HCT116 (cell line): ENCODE measurements at regions of chr10 and their contacts with region 1.

Region 1: GRCh38 chr10:80498833-80499741 is 38.6 kb upstream of the SH2D4B start:
- DNase-seq: peak; percentile 85
- ATAC-seq: peak; percentile 85
- H3K4me3 ChIP-seq: peak overlapping the region in 1 of 2 experiments; percentile 27; a peak in 2 of 4 replicates
- H3K27ac ChIP-seq: peak overlapping the region; percentile 95
- H3K4me1 ChIP-seq: peaks cover 90 to 95% of the 10 kb centered on the region in 2 experiments
- H3K27me3 ChIP-seq: no peaks in the 10 kb centered on the region
- CTCF ChIP-seq: 0 out of 6 replicates have a peak, but pooled peaks of 1 of the 3 experiments have one; percentile 4
- POLR2A ChIP-seq: no peak
- RAD21 ChIP-seq: no peak

Region 2: GRCh38 chr10:80459047-80459931 is 39.8 kb before region 1 on chr10:
- CTCF ChIA-PET with region 1: interaction called, 53 read pairs
- POLR2A ChIA-PET with region 1: interaction called, 18 read pairs
- RAD21 ChIA-PET with region 1: interaction called in 1 of 2 experiments, 4 read pairs
- intact Hi-C with region 1: loop called (anchors 2 kb)
- DNase-seq: no peak
- ATAC-seq: peak; percentile 65
- H3K4me3 ChIP-seq: peak overlapping the region in 1 of 2 experiments; percentile 47; a peak in 1 of 4 replicates
- H3K27ac ChIP-seq: peak overlapping the region; percentile 79
- H3K4me1 ChIP-seq: peaks cover 81 to 92% of the 10 kb centered on the region in 2 experiments
- H3K27me3 ChIP-seq: no peaks in the 10 kb centered on the region
- CTCF ChIP-seq: no peak
- POLR2A ChIP-seq: no peak
- RAD21 ChIP-seq: 0 out of 2 replicates have a peak, but pooled peaks have one; percentile 4

Region 3: DNA sequence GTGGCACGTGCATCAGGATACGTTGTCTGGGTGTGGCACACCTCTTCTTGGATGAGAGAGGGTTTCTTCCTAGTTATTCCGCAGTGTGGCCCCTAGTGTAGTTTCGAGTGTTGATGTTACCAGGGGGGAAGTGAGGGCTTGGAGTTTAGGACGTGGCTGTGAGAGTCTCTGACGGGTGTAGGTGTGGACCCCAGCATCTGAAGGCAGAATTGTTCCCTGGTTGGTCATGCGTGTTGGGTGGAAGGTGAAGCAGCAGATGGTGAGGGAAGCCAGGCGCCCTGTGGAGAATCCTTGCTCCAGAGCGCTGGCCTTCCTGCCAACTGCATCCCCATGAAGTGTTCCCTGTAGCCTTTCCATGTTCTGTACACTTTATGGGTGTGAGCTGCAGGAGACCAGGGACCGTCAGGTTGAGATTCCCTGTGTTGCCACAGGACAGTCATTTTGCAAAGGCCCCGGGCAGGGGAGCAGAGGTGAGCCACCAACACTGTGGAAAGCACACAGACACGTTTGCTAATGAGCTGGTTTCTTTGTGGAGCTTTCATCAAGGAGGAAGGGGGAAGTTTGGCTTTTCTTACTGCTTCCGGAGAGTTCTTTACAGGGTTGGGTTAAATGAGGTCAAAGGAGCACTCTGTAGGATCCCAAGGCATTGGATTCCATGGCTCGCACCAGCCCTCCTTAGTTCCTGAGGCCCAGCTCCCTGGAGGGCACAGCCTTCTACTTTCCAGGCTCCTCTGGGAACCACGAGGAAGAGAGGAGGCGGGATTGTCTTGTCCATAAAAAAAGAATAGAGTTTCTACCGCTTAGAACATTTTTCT is 12.9 kb before region 1 on chr10:
- CTCF ChIA-PET with region 1: no interaction called
- POLR2A ChIA-PET with region 1: interaction called, 4 read pairs
- RAD21 ChIA-PET with region 1: no interaction called
- intact Hi-C with region 1: loop called (anchors 2 kb)
- DNase-seq: no peak
- ATAC-seq: no peak
- H3K4me3 ChIP-seq: no peak overlapping the region
- H3K27ac ChIP-seq: no peak overlapping the region
- H3K4me1 ChIP-seq: peaks cover 41 to 66% of the 10 kb centered on the region in 2 experiments
- H3K27me3 ChIP-seq: no peaks in the 10 kb centered on the region
- CTCF ChIP-seq: no peak
- POLR2A ChIP-seq: no peak
- RAD21 ChIP-seq: no peak